ENCODE measurements at regions of chr1 and their contacts with region 1.

Region 1: DNA sequence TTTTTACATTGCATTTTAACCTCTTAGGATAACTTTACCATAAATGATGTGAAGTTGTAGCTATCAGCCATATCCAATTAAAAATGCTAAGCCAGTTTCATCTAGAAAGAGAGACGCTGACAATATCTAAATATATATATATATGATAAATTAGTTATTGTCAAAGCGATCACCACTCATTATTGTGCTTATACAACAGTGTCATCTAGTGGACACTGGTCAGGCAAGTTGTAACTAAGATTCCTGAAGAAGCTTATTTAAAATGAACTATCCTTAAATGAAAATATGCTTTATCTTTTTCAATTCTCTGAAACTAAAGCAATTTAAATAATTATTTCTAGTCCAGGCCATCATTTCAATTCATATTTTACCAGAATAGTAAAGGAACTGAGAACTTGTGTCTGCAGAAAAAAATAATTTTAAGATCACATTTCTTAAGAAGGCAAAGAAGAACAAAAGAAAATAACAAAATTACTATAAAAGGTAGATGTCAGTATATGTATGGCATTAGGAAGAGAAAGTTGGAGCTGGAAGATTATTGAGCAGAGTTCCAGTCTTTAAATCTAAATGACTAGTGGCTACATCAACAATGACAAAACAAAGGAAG is 193.3 kb upstream of the SNX7 start:
- DNase-seq: peak; percentile 84
- H3K4me3 ChIP-seq: no peak overlapping the region
- H3K27ac ChIP-seq: peak overlapping the region; percentile 47
- H3K4me1 ChIP-seq: peaks cover 7% of the 10 kb centered on the region
- H3K27me3 ChIP-seq: no peaks in the 10 kb centered on the region
- CTCF ChIP-seq: peak; percentile 48 to 62
- POLR2A ChIP-seq: no peak

Region 2: DNA sequence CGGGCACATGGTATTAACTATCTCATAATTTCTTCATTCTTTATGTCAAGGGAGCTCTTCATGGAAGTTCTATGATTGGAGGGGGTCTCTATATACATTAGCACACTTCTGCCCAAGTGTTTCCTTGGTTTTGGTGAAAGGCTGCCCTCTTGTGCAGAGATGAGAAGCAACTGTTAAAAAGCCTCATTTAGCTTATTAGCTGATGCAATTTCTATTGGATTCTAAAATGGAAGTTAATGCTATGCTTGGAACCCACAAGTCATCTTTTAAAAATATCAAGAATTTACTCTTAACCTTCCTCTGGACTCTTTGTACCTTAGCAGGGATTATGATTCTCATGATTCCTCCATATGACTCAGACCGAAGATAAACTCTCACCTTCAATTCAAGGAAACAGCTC is 1417.7 kb before region 1 on chr1:
- CTCF ChIA-PET with region 1: interaction called, 16 read pairs
- POLR2A ChIA-PET with region 1: no interaction called
- dilution Hi-C with region 1: no loop called
- intact Hi-C with region 1: no loop called
- DNase-seq: peak; percentile 62
- H3K4me3 ChIP-seq: no peak overlapping the region
- H3K27ac ChIP-seq: no peak overlapping the region
- H3K4me1 ChIP-seq: no peaks in the 10 kb centered on the region
- H3K27me3 ChIP-seq: no peaks in the 10 kb centered on the region
- CTCF ChIP-seq: peak; percentile 19 to 47
- POLR2A ChIP-seq: no peak

Region 3: DNA sequence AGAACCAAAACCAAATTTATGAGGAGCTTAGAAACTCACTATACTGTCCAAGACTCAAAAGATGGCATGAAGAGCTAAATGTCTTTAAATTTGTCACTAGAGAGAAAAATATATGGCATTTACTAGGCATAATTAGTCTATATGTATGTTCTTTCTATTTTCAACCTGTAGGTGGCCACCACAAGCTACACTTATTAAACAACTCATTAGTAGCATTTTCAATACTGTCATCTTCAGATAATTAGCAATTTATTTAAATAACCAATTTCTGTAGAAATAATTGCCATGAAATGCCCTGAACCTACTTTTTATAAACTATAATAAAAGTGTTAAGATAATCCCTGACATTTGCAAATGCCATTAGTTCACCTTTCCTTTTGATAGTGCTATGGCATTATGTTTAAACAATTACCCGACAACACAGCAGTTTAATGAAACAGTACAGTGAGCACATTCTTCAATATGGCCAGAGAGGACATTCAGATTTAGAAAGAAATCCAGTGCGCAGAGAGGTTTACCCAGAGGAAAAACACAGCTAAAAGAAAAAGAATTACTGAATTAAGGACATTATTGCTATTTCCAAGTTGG is 1224.1 kb before region 1 on chr1:
- CTCF ChIA-PET with region 1: interaction called, 19 read pairs
- POLR2A ChIA-PET with region 1: no interaction called
- dilution Hi-C with region 1: no loop called
- intact Hi-C with region 1: loop called (anchors 10 kb)
- DNase-seq: peak; percentile 48
- H3K4me3 ChIP-seq: no peak overlapping the region
- H3K27ac ChIP-seq: no peak overlapping the region
- H3K4me1 ChIP-seq: no peaks in the 10 kb centered on the region
- H3K27me3 ChIP-seq: no peaks in the 10 kb centered on the region
- CTCF ChIP-seq: peak in 1 of 2 donors; percentile 35
- POLR2A ChIP-seq: no peak

Region 4: DNA sequence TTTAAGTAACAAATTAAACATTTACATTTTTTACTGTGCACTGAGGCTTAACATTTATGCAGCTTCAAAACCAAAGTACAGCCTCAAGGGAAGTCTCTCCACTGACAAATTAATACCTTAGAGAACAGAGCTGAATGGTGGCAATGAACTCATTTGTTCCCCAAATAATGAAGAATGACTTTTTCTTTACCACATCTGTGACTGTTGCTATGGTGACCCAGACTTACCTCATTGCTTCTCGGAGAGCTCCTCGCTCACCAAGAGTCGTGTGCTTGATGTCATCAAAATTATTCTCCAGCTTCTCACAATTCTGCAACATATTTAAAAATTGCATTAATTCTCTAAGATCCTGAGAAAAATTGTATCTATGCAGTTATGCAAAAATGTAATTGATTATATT is 640.3 kb before region 1 on chr1:
- CTCF ChIA-PET with region 1: interaction called, 14 read pairs
- POLR2A ChIA-PET with region 1: no interaction called
- dilution Hi-C with region 1: no loop called
- intact Hi-C with region 1: no loop called
- DNase-seq: no peak
- H3K4me3 ChIP-seq: no peak overlapping the region
- H3K27ac ChIP-seq: no peak overlapping the region
- H3K4me1 ChIP-seq: no peaks in the 10 kb centered on the region
- H3K27me3 ChIP-seq: no peaks in the 10 kb centered on the region
- CTCF ChIP-seq: no peak
- POLR2A ChIP-seq: no peak

Region 5: DNA sequence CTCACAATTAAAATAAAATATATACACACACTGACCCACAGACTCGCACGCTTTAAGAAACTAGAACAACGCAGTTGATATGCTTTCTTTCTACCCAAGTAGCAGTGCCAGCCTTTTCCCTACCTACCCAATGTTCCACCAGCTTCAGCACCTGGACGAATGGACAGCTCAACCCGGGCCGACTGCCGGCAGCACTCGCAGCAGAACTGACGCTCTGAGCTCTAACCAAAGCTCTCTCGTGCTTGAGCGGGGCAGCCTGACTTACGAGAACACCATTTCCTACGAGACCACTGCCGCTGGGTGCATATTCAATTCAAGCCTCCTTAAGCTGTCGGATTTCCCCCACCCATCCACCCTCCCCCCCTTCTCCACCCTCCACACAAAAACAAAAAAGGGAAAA is 420.0 kb before region 1 on chr1:
- CTCF ChIA-PET with region 1: interaction called, 126 read pairs
- POLR2A ChIA-PET with region 1: interaction called, 6 read pairs
- dilution Hi-C with region 1: no loop called
- intact Hi-C with region 1: loop called (anchors 1 kb)
- DNase-seq: peak; percentile 84
- H3K4me3 ChIP-seq: peak overlapping the region; percentile 34 to 62 (median 60)
- H3K27ac ChIP-seq: no peak overlapping the region
- H3K4me1 ChIP-seq: peaks cover 32% of the 10 kb centered on the region
- H3K27me3 ChIP-seq: no peaks in the 10 kb centered on the region
- CTCF ChIP-seq: peak in 1 of 2 donors; percentile 6
- POLR2A ChIP-seq: no peak

Region 6: DNA sequence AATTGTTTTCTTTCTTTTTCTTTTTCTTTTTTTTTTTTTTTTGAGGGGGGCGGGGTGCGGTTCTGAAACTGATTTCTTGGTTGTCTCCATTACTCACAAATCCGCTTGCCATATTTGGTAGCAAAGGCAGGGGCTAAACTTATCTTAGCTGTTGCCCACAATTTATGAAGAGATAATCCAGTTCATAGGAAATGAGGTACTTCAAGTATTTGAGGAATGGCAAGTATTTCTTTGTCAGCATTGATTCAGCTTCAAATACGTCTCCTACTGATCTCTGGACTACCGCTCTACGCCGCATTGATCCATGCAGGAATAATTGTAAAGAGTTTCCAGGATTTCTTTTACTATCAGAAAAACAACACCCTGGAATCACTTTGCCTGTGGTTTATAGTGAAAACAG is 258.1 kb before region 1 on chr1:
- CTCF ChIA-PET with region 1: interaction called, 15 read pairs
- POLR2A ChIA-PET with region 1: no interaction called
- dilution Hi-C with region 1: no loop called
- intact Hi-C with region 1: loop called (anchors 1 kb)
- DNase-seq: peak; percentile 89
- H3K4me3 ChIP-seq: peak overlapping the region; percentile 31 to 94 (median 89)
- H3K27ac ChIP-seq: peak overlapping the region; percentile 91
- H3K4me1 ChIP-seq: peaks cover 23% of the 10 kb centered on the region
- H3K27me3 ChIP-seq: no peaks in the 10 kb centered on the region
- CTCF ChIP-seq: no peak
- POLR2A ChIP-seq: peak; percentile 69

Region 7: DNA sequence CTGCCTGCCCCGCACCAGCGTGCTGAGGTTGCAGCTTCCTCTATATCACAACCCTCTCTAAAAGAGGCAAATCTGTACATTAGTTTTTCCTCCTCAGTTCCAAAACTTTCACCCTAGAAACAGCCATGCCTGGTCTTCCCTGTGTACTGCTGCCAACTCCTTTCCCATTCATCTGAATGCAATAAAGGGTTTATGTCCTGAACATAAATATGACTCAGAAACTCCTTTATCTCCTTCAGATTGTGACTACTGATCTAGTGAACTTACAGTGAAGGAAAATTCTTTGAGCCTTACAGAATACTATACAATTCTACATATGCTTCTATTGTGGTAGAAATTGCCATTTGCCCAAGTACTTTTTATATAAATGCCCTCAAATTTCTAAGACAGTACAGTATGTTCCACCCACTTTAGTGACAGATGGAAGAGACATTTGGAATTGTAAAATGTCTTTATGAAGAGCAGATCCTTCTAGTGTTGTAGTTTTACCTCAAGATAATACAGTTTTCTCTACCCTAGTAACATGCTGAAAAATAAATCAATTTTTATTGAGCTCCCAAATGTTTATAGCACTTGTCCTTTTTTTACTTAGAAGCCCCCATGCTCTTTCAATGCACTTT is 151.8 kb before region 1 on chr1:
- CTCF ChIA-PET with region 1: interaction called, 20 read pairs
- POLR2A ChIA-PET with region 1: no interaction called
- dilution Hi-C with region 1: no loop called
- intact Hi-C with region 1: no loop called
- DNase-seq: peak; percentile 81
- H3K4me3 ChIP-seq: no peak overlapping the region
- H3K27ac ChIP-seq: peak overlapping the region; percentile 79
- H3K4me1 ChIP-seq: peaks cover 28% of the 10 kb centered on the region
- H3K27me3 ChIP-seq: no peaks in the 10 kb centered on the region
- CTCF ChIP-seq: no peak
- POLR2A ChIP-seq: no peak

Region 8: GRCh38 chr1:98575955-98576354 is 107.7 kb after region 1 on chr1:
- CTCF ChIA-PET with region 1: no interaction called
- POLR2A ChIA-PET with region 1: no interaction called
- dilution Hi-C with region 1: no loop called
- intact Hi-C with region 1: no loop called
- DNase-seq: no peak
- H3K4me3 ChIP-seq: no peak overlapping the region
- H3K27ac ChIP-seq: no peak overlapping the region
- H3K4me1 ChIP-seq: no peaks in the 10 kb centered on the region
- H3K27me3 ChIP-seq: peaks cover 2 to 11% of the 10 kb centered on the region in 2 experiments
- CTCF ChIP-seq: no peak
- POLR2A ChIP-seq: no peak

Measured in endothelial cell of umbilical vein (primary cell).